Spleen (tissue), 13 donors: ENCODE measurements at regions of chr6 and their contacts with region 1.

Region 1: GRCh38 chr6:33579828-33580714 is at the start of gene BAK1:
- DNase-seq: peak; percentile 99
- H3K4me3 ChIP-seq: peak within 1 kb of the TSS; percentile 79 to 96 (median 92)
- H3K27ac ChIP-seq: peak within 1 kb of the TSS; percentile 84 to 97 (median 92)
- H3K4me1 ChIP-seq: peaks cover 16 to 64% (median 46%) of the 10 kb centered on the region in 6 donors
- H3K27me3 ChIP-seq: no peaks in the 10 kb centered on the region
- CTCF ChIP-seq: peak; percentile 27 to 79 (median 60)
- POLR2A ChIP-seq: peak in 2 of 3 donors; percentile 21 to 76
- total RNA-seq, gene BAK1: 22.6 to 34.4 (median 28.3) TPM

Region 2: GRCh38 chr6:33029328-33030184 is 550.5 kb before region 1 on chr6:
- intact Hi-C with region 1: no loop called
- DNase-seq: peak; percentile 82
- H3K4me3 ChIP-seq: no peak overlapping the region
- H3K27ac ChIP-seq: peak overlapping the region; percentile 83 to 96 (median 88)
- H3K4me1 ChIP-seq: peaks cover 0 to 44% (median 25%) of the 10 kb centered on the region in 6 donors
- H3K27me3 ChIP-seq: no peaks in the 10 kb centered on the region
- CTCF ChIP-seq: no peak
- POLR2A ChIP-seq: peak in 2 of 3 donors; percentile 90 to 96

Region 3: GRCh38 chr6:33430991-33431879 is 148.8 kb before region 1 on chr6:
- intact Hi-C with region 1: loop called (anchors 10 kb)
- DNase-seq: peak; percentile 94
- H3K4me3 ChIP-seq: peak overlapping the region in 7 of 8 donors; percentile 17 to 87 (median 34)
- H3K27ac ChIP-seq: peak overlapping the region in 5 of 8 donors; percentile 89 to 96 (median 91)
- H3K4me1 ChIP-seq: peaks cover 34 to 76% (median 67%) of the 10 kb centered on the region in 6 donors
- H3K27me3 ChIP-seq: no peaks in the 10 kb centered on the region
- CTCF ChIP-seq: no peak
- POLR2A ChIP-seq: no peak

Region 4: GRCh38 chr6:33794891-33795623 is 215.0 kb after region 1 on chr6:
- intact Hi-C with region 1: no loop called
- DNase-seq: no peak
- H3K4me3 ChIP-seq: no peak overlapping the region
- H3K27ac ChIP-seq: no peak overlapping the region
- H3K4me1 ChIP-seq: peaks cover 0 to 5% (median 0%) of the 10 kb centered on the region in 6 donors
- H3K27me3 ChIP-seq: peaks cover 0 to 26% (median 0%) of the 10 kb centered on the region in 7 donors
- CTCF ChIP-seq: no peak
- POLR2A ChIP-seq: no peak